GM13977 (cell line): ENCODE measurements at regions of chrX and their contacts with region 1.

Region 1: GRCh38 chrX:103845165-103845653 is 13.2 kb upstream of the RAB9B start:
- DNase-seq: peak; percentile 36
- CTCF ChIP-seq: peak; percentile 85

Region 2: DNA sequence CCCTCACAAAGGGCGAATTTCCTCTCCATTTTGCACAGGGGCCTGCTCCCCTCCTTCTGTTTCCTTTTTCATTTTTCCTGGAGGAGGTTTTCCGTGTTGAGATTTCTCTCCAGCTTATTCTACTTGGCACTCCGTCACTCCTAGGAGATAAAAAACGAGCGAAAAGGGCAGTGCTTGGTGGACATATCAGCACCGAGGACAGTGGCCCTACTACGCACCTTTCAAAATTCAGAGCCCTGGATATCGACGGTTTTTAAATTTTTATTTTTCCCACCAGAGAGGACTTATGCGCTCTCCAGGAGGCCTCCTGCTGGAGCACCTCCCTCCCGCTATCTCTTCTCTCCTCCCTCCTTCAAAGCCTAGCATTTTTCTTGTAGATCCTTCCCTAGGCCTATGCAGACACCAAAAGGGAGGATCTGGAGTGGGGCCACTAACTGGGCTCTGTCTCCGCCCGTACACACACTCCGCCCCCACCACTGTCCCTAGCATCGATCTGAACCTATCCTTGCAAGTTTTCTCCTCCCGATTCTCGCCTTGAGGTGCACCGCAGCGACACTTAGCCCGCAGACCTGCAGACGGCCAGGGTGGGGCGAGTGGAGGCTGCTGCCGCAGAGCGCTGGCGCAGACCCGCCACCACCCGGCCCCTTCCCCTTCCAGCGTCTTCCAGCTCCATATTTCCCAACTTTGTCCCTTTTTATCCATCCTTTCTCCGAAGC is 497.4 kb before region 1 on chrX:
- in situ Hi-C with region 1: no loop called
- DNase-seq: no peak
- CTCF ChIP-seq: no peak

Region 3: GRCh38 chrX:104113222-104113965 is 268.2 kb after region 1 on chrX:
- in situ Hi-C with region 1: loop called (anchors 25 kb)
- DNase-seq: peak; percentile 49
- CTCF ChIP-seq: peak; percentile 49